Activated CD8-positive, alpha-beta memory T cell treated with anti-CD3 and anti-CD28 coated beads, Interleukin-2, amount 10 ng/mL, durations not matched to agents 7 days and 5 days (primary cell): ENCODE measurements at regions of chr2 and their contacts with region 1.

Region 1: GRCh38 chr2:197113275-197113711 is 186.8 kb upstream of the PGAP1 start:
- DNase-seq: no peak
- ATAC-seq: peak; percentile 52
- H3K4me3 Mint-ChIP-seq: no peak overlapping the region
- H3K27ac Mint-ChIP-seq: peak overlapping the region; percentile 76
- H3K4me1 Mint-ChIP-seq: peaks cover 28% of the 10 kb centered on the region
- H3K27me3 Mint-ChIP-seq: no peaks in the 10 kb centered on the region

Region 2: GRCh38 chr2:197045115-197045514 is 68.2 kb before region 1 on chr2:
- CTCF ChIA-PET with region 1: no interaction called
- DNase-seq: no peak
- ATAC-seq: no peak
- H3K4me3 Mint-ChIP-seq: no peak overlapping the region
- H3K27ac Mint-ChIP-seq: peak overlapping the region; percentile 3
- H3K4me1 Mint-ChIP-seq: peaks cover 9% of the 10 kb centered on the region
- H3K27me3 Mint-ChIP-seq: no peaks in the 10 kb centered on the region

Region 3: GRCh38 chr2:197097578-197098366 is 15.5 kb before region 1 on chr2:
- CTCF ChIA-PET with region 1: interaction called, 17 read pairs
- DNase-seq: no peak
- ATAC-seq: no peak
- H3K4me3 Mint-ChIP-seq: no peak overlapping the region
- H3K27ac Mint-ChIP-seq: no peak overlapping the region
- H3K4me1 Mint-ChIP-seq: peaks cover 7% of the 10 kb centered on the region
- H3K27me3 Mint-ChIP-seq: no peaks in the 10 kb centered on the region

Region 4: GRCh38 chr2:197152451-197153228 is 39.3 kb after region 1 on chr2:
- CTCF ChIA-PET with region 1: interaction called, 12 read pairs
- DNase-seq: no peak
- ATAC-seq: peak; percentile 39
- H3K4me3 Mint-ChIP-seq: no peak overlapping the region
- H3K27ac Mint-ChIP-seq: peak overlapping the region; percentile 22
- H3K4me1 Mint-ChIP-seq: peaks cover 71% of the 10 kb centered on the region
- H3K27me3 Mint-ChIP-seq: no peaks in the 10 kb centered on the region

Region 5: DNA sequence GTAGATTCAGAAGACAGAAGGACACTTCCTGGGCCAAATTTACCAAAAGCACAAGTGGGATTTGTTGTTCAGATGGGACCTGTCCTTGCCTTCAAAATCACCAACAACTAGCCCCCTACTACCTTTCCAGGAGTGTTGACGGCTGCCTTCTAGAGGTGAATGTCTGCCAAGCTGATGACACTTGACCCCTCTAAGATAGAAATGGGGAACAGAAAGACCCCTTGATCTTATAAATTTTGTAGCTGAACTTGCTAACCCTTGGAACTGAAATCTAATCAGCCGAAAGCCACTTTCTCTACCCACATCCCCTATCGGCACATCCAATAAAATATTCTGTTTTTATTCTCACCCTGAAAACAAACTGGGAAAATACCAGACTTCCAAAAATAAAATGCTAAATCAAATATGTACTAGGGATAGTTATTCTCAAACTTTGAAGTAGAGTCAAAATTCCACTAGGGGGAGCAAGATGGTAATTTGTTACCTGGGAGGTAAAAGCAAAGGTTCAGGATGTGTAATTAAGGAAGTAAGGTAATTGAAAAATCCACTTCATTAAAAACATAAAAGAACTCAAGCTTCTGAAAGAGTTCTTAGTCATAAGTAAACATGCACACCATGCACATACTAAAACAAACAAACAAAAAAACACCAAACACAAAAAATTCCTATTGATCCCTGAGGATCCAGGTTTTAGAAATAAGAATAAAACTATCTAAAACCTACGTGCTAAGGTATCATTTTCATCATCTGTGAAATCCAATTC is 78.1 kb after region 1 on chr2:
- CTCF ChIA-PET with region 1: interaction called, 13 read pairs
- DNase-seq: no peak
- ATAC-seq: peak; percentile 35
- H3K4me3 Mint-ChIP-seq: peak overlapping the region; percentile 44
- H3K27ac Mint-ChIP-seq: peak overlapping the region; percentile 78
- H3K4me1 Mint-ChIP-seq: peaks cover 73% of the 10 kb centered on the region
- H3K27me3 Mint-ChIP-seq: no peaks in the 10 kb centered on the region

Region 6: GRCh38 chr2:197356136-197356535 is 242.8 kb after region 1 on chr2:
- CTCF ChIA-PET with region 1: interaction called, 18 read pairs
- DNase-seq: no peak
- ATAC-seq: no peak
- H3K4me3 Mint-ChIP-seq: no peak overlapping the region
- H3K27ac Mint-ChIP-seq: no peak overlapping the region
- H3K4me1 Mint-ChIP-seq: peaks cover 22% of the 10 kb centered on the region
- H3K27me3 Mint-ChIP-seq: no peaks in the 10 kb centered on the region

Region 7: GRCh38 chr2:197378494-197379307 is 265.4 kb after region 1 on chr2:
- CTCF ChIA-PET with region 1: interaction called, 13 read pairs
- DNase-seq: peak; percentile 72
- ATAC-seq: peak; percentile 84
- H3K4me3 Mint-ChIP-seq: no peak overlapping the region
- H3K27ac Mint-ChIP-seq: no peak overlapping the region
- H3K4me1 Mint-ChIP-seq: peaks cover 27% of the 10 kb centered on the region
- H3K27me3 Mint-ChIP-seq: peaks cover 2% of the 10 kb centered on the region

Region 8: DNA sequence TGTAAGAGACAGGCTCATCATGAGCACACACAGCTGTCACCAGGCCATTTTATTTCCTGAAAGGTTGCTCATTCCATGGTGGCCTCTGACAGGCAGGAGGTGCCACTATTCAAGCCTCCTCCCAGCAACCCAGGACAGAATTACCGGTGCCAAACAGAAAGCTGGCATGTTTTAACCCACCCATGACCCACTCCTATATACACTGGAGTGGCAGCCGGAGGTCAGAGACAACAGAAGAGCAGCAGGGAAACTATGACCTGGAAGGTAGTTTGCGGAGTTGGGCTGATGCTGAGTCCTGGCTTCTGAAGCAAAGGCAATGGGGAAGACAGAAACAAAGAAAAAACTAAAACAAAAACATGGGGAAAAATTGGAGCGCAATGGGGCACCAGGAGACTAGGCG is 559.8 kb after region 1 on chr2:
- CTCF ChIA-PET with region 1: no interaction called
- DNase-seq: no peak
- ATAC-seq: no peak
- H3K4me3 Mint-ChIP-seq: no peak overlapping the region
- H3K27ac Mint-ChIP-seq: no peak overlapping the region
- H3K4me1 Mint-ChIP-seq: no peaks in the 10 kb centered on the region
- H3K27me3 Mint-ChIP-seq: peaks cover 19% of the 10 kb centered on the region